Activated CD4-positive, alpha-beta T cell treated with anti-CD3 and anti-CD28 coated beads for 36 hours (primary cell): ENCODE measurements at regions of chr21 and their contacts with region 1.

Region 1: GRCh38 chr21:34078915-34079314 is 5.5 kb downstream of the MRPS6 start:
- DNase-seq: peak; percentile 46
- ATAC-seq: no peak
- H3K4me3 Mint-ChIP-seq: peak overlapping the region; percentile 13
- H3K27ac Mint-ChIP-seq: peak overlapping the region; percentile 71
- H3K4me1 Mint-ChIP-seq: peaks cover 89% of the 10 kb centered on the region
- H3K27me3 Mint-ChIP-seq: no peaks in the 10 kb centered on the region

Region 2: GRCh38 chr21:33894736-33895288 is 184.1 kb before region 1 on chr21:
- CTCF ChIA-PET with region 1: no interaction called
- POLR2A ChIA-PET with region 1: no interaction called
- intact Hi-C with region 1: no loop called
- DNase-seq: peak; percentile 87
- ATAC-seq: peak; percentile 99
- H3K4me3 Mint-ChIP-seq: peak overlapping the region; percentile 41
- H3K27ac Mint-ChIP-seq: peak overlapping the region; percentile 64
- H3K4me1 Mint-ChIP-seq: peaks cover 14% of the 10 kb centered on the region
- H3K27me3 Mint-ChIP-seq: peaks cover 6% of the 10 kb centered on the region

Region 3: GRCh38 chr21:33931799-33932390 is 147.0 kb before region 1 on chr21:
- CTCF ChIA-PET with region 1: interaction called, 4 read pairs
- POLR2A ChIA-PET with region 1: no interaction called
- intact Hi-C with region 1: loop called in 1 of 2 experiments (anchors 2 kb)
- DNase-seq: peak; percentile 38
- ATAC-seq: peak; percentile 13
- H3K4me3 Mint-ChIP-seq: peak overlapping the region; percentile 92
- H3K27ac Mint-ChIP-seq: peak overlapping the region; percentile 99
- H3K4me1 Mint-ChIP-seq: peaks cover 40% of the 10 kb centered on the region
- H3K27me3 Mint-ChIP-seq: no peaks in the 10 kb centered on the region

Region 4: GRCh38 chr21:34091607-34092006 is 12.7 kb after region 1 on chr21:
- CTCF ChIA-PET with region 1: interaction called, 29 read pairs
- POLR2A ChIA-PET with region 1: interaction called, 3 read pairs
- intact Hi-C with region 1: no loop called
- DNase-seq: no peak
- ATAC-seq: no peak
- H3K4me3 Mint-ChIP-seq: no peak overlapping the region
- H3K27ac Mint-ChIP-seq: no peak overlapping the region
- H3K4me1 Mint-ChIP-seq: peaks cover 48% of the 10 kb centered on the region
- H3K27me3 Mint-ChIP-seq: no peaks in the 10 kb centered on the region

Region 5: GRCh38 chr21:34129039-34129891 is 50.4 kb after region 1 on chr21:
- CTCF ChIA-PET with region 1: no interaction called
- POLR2A ChIA-PET with region 1: interaction called, 3 read pairs
- intact Hi-C with region 1: loop called (anchors 1 to 2 kb)
- DNase-seq: peak; percentile 87
- ATAC-seq: peak; percentile 94
- H3K4me3 Mint-ChIP-seq: peak overlapping the region; percentile 60
- H3K27ac Mint-ChIP-seq: peak overlapping the region; percentile 94
- H3K4me1 Mint-ChIP-seq: peaks cover 89% of the 10 kb centered on the region
- H3K27me3 Mint-ChIP-seq: no peaks in the 10 kb centered on the region

Region 6: DNA sequence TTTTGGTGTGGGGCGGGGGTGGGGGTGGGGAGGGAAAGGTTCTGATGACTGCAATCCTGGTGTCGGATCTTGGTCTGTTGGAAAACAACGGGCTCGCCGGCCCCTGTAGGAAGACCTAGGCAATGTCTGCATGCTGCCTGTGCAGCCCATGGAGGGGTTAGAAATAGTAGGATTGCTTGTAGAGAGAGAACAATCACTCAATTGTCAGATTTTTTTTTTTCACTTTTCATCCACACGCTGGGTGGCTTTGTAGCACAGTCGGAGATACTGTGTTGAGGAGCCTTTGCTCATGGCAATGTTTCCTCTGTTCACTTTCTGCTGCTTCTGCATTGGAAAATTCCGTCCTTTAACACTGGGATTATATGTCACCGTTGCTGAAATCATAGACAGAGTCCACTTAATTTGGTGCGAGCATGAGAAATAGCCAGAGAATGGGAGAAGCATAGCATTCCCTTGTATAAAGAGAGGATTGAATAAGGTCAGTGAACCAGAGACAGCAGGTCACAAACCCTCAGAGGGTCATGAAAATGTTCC is 102.0 kb after region 1 on chr21:
- CTCF ChIA-PET with region 1: no interaction called
- POLR2A ChIA-PET with region 1: no interaction called
- intact Hi-C with region 1: no loop called
- DNase-seq: no peak
- ATAC-seq: no peak
- H3K4me3 Mint-ChIP-seq: no peak overlapping the region
- H3K27ac Mint-ChIP-seq: no peak overlapping the region
- H3K4me1 Mint-ChIP-seq: peaks cover 6% of the 10 kb centered on the region
- H3K27me3 Mint-ChIP-seq: no peaks in the 10 kb centered on the region

Region 7: DNA sequence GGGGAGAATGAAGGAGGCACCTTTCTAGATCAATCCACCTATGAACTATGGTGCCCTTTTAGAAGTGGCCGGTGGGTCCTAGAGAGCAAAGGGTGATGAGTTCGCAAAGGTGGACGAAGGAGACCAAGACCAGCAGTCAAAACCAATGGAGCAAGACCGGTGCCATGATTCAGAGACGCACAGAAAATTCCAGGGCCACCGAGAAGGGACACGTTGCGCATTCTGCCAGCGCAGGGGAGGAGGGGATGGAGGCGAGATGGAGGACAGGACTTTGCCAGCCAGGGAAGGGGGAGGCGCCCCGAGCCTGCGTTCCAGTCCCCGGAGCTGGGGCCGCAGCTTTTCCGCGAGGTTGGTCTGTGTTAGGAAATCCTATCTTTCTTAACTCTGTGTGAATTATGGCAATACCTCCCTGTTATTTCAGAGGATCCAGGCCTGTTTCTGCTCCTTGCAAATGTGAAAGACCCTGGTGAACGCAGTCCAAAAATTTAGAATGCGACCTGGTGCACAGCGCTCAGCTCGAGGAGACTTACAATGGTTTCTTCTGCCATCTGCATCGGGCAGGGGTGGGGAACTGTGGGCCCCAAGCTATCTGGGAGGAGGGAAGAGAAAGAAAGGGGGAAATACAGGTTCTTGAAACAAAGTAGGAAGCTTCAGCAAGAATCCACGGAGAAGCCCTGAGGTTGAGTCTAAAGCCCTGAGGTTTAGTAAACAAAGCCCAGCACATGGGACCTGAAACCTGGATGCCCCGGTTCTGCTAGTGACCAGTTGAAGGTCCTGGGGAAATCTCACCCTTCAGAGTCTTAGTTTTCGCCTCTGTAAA is 123.8 kb after region 1 on chr21:
- CTCF ChIA-PET with region 1: interaction called, 4 read pairs
- POLR2A ChIA-PET with region 1: no interaction called
- intact Hi-C with region 1: loop called (anchors 5 kb)
- DNase-seq: no peak
- ATAC-seq: no peak
- H3K4me3 Mint-ChIP-seq: peak overlapping the region; percentile 70
- H3K27ac Mint-ChIP-seq: no peak overlapping the region
- H3K4me1 Mint-ChIP-seq: peaks cover 40% of the 10 kb centered on the region
- H3K27me3 Mint-ChIP-seq: peaks cover 3% of the 10 kb centered on the region